Caco-2 (cell line): ENCODE measurements at regions of chr17 and their contacts with region 1.

Region 1: GRCh38 chr17:12667299-12667958 is 1.7 kb downstream of the MYOCD start:
- DNase-seq: peak; percentile 33 to 42
- H3K4me3 ChIP-seq: no peak overlapping the region
- H3K4me3 Mint-ChIP-seq: no peak overlapping the region
- H3K27ac Mint-ChIP-seq: no peak overlapping the region
- H3K4me1 ChIP-seq: no peaks in the 10 kb centered on the region
- H3K4me1 Mint-ChIP-seq: no peaks in the 10 kb centered on the region
- H3K27me3 ChIP-seq: no peaks in the 10 kb centered on the region
- H3K27me3 Mint-ChIP-seq: no peaks in the 10 kb centered on the region
- CTCF ChIP-seq: peak; percentile 20 to 34

Region 2: GRCh38 chr17:12180644-12181261 is 486.7 kb before region 1 on chr17:
- CTCF ChIA-PET with region 1: no interaction called
- POLR2A ChIA-PET with region 1: no interaction called
- intact Hi-C with region 1: loop called (anchors 1 kb)
- DNase-seq: peak in 1 of 2 experiments; percentile 10
- H3K4me3 ChIP-seq: no peak overlapping the region
- H3K4me3 Mint-ChIP-seq: no peak overlapping the region
- H3K27ac Mint-ChIP-seq: no peak overlapping the region
- H3K4me1 ChIP-seq: no peaks in the 10 kb centered on the region
- H3K4me1 Mint-ChIP-seq: no peaks in the 10 kb centered on the region
- H3K27me3 ChIP-seq: no peaks in the 10 kb centered on the region
- H3K27me3 Mint-ChIP-seq: no peaks in the 10 kb centered on the region
- CTCF ChIP-seq: peak; percentile 38

Region 3: GRCh38 chr17:12256380-12256995 is 410.9 kb before region 1 on chr17:
- CTCF ChIA-PET with region 1: no interaction called
- POLR2A ChIA-PET with region 1: no interaction called
- intact Hi-C with region 1: loop called (anchors 1 kb)
- DNase-seq: peak in 1 of 2 experiments; percentile 23
- H3K4me3 ChIP-seq: no peak overlapping the region
- H3K4me3 Mint-ChIP-seq: no peak overlapping the region
- H3K27ac Mint-ChIP-seq: no peak overlapping the region
- H3K4me1 ChIP-seq: no peaks in the 10 kb centered on the region
- H3K4me1 Mint-ChIP-seq: no peaks in the 10 kb centered on the region
- H3K27me3 ChIP-seq: no peaks in the 10 kb centered on the region; the same call in 1 of the 2 replicates
- H3K27me3 Mint-ChIP-seq: no peaks in the 10 kb centered on the region
- CTCF ChIP-seq: peak in 1 of 2 experiments; percentile 50

Region 4: GRCh38 chr17:12545877-12546513 is 121.4 kb before region 1 on chr17:
- CTCF ChIA-PET with region 1: interaction called, 9 read pairs
- POLR2A ChIA-PET with region 1: no interaction called
- intact Hi-C with region 1: loop called (anchors 1 kb)
- DNase-seq: peak in 1 of 2 experiments; percentile 37
- H3K4me3 ChIP-seq: no peak overlapping the region
- H3K4me3 Mint-ChIP-seq: no peak overlapping the region
- H3K27ac Mint-ChIP-seq: no peak overlapping the region
- H3K4me1 ChIP-seq: no peaks in the 10 kb centered on the region
- H3K4me1 Mint-ChIP-seq: no peaks in the 10 kb centered on the region
- H3K27me3 ChIP-seq: no peaks in the 10 kb centered on the region
- H3K27me3 Mint-ChIP-seq: no peaks in the 10 kb centered on the region
- CTCF ChIP-seq: peak in 1 of 2 experiments; percentile 48

Region 5: DNA sequence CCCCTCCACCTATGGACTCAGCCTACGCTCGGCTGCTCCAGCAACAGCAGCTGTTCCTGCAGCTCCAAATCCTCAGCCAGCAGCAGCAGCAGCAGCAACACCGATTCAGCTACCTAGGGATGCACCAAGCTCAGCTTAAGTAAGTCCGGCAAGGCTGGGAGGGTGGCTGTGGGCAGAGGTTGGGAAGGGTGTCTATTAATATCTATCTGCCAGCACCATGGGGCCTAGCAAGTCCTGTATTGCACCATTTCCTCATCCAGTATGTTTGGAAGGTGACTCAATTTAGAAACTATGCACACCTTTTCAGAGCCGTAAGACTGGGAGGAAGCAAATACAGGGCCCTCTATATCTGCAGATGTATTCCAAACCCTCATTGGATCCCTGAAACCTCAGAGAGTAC is 76.9 kb after region 1 on chr17:
- CTCF ChIA-PET with region 1: interaction called, 6 read pairs
- POLR2A ChIA-PET with region 1: no interaction called
- intact Hi-C with region 1: loop called (anchors 1 kb)
- DNase-seq: no peak
- H3K4me3 ChIP-seq: no peak overlapping the region
- H3K4me3 Mint-ChIP-seq: no peak overlapping the region
- H3K27ac Mint-ChIP-seq: no peak overlapping the region
- H3K4me1 ChIP-seq: no peaks in the 10 kb centered on the region
- H3K4me1 Mint-ChIP-seq: peaks cover 10% of the 10 kb centered on the region
- H3K27me3 ChIP-seq: no peaks in the 10 kb centered on the region
- H3K27me3 Mint-ChIP-seq: no peaks in the 10 kb centered on the region
- CTCF ChIP-seq: no peak